HepG2 (cell line): ENCODE measurements at regions of chr6 and their contacts with region 1.

Region 1: GRCh38 chr6:102525336-102525735 is 1131.8 kb downstream of the GRIK2 start:
- DNase-seq: no peak
- ATAC-seq: no peak
- H3K4me3 ChIP-seq: no peak overlapping the region
- H3K27ac ChIP-seq: no peak overlapping the region
- H3K4me1 ChIP-seq: no peaks in the 10 kb centered on the region
- H3K27me3 ChIP-seq: no peaks in the 10 kb centered on the region
- CTCF ChIP-seq: no peak
- EP300 ChIP-seq: no peak
- POLR2A ChIP-seq: no peak
- RAD21 ChIP-seq: no peak

Region 2: DNA sequence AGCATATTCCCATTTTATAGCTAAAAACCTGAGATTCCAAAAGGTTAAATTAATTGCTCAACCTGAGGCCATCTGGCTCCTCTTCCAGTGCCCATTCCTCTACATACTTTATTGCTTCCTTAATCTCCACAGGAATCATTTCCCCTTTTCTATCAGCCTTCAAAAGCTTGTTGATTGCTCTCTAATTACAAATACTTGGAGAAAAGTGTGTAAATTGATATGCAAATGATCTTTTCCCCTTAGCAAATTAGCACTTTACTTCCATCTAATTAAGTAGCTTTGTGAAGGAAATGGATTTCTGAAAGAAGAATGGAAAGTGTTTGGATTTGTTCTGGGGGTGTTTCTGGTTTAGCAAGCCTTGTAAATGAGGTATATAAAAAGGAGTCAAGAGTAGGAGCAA is 808.5 kb before region 1 on chr6:
- CTCF ChIA-PET with region 1: no interaction called
- POLR2A ChIA-PET with region 1: no interaction called
- in situ Hi-C with region 1: no loop called
- intact Hi-C with region 1: no loop called
- DNase-seq: no peak
- ATAC-seq: no peak
- H3K4me3 ChIP-seq: no peak overlapping the region
- H3K27ac ChIP-seq: no peak overlapping the region
- H3K4me1 ChIP-seq: no peaks in the 10 kb centered on the region
- H3K27me3 ChIP-seq: no peaks in the 10 kb centered on the region; a peak in 1 of 5 replicates
- CTCF ChIP-seq: no peak
- EP300 ChIP-seq: no peak
- POLR2A ChIP-seq: no peak
- RAD21 ChIP-seq: no peak

Region 3: GRCh38 chr6:102538556-102538955 is 13.2 kb after region 1 on chr6:
- CTCF ChIA-PET with region 1: no interaction called
- POLR2A ChIA-PET with region 1: no interaction called
- in situ Hi-C with region 1: no loop called
- intact Hi-C with region 1: loop called (anchors 1 kb)
- DNase-seq: no peak
- ATAC-seq: no peak
- H3K4me3 ChIP-seq: no peak overlapping the region
- H3K27ac ChIP-seq: no peak overlapping the region
- H3K4me1 ChIP-seq: no peaks in the 10 kb centered on the region
- H3K27me3 ChIP-seq: no peaks in the 10 kb centered on the region
- CTCF ChIP-seq: no peak
- EP300 ChIP-seq: no peak
- POLR2A ChIP-seq: no peak
- RAD21 ChIP-seq: no peak